ENCODE measurements at regions of chrX and their contacts with region 1.

Region 1: GRCh38 chrX:150977411-150978162 is 5.5 kb upstream of the HMGB3 start:
- DNase-seq: no peak
- ATAC-seq: no peak
- H3K4me3 ChIP-seq: no peak overlapping the region
- H3K27ac ChIP-seq: no peak overlapping the region
- H3K4me1 ChIP-seq: peaks cover 0 to 2% of the 10 kb centered on the region in 2 donors
- H3K27me3 ChIP-seq: no peaks in the 10 kb centered on the region
- CTCF ChIP-seq: no peak
- POLR2A ChIP-seq: no peak

Region 2: GRCh38 chrX:150504397-150505182 is 473.0 kb before region 1 on chrX:
- in situ Hi-C with region 1: no loop called
- intact Hi-C with region 1: no loop called
- DNase-seq: no peak
- ATAC-seq: no peak
- H3K4me3 ChIP-seq: no peak overlapping the region
- H3K27ac ChIP-seq: no peak overlapping the region
- H3K4me1 ChIP-seq: peaks cover 0 to 11% of the 10 kb centered on the region in 2 donors
- H3K27me3 ChIP-seq: no peaks in the 10 kb centered on the region
- CTCF ChIP-seq: no peak
- POLR2A ChIP-seq: no peak

Region 3: GRCh38 chrX:150913511-150913910 is 64.1 kb before region 1 on chrX:
- in situ Hi-C with region 1: no loop called
- intact Hi-C with region 1: no loop called
- DNase-seq: no peak
- ATAC-seq: no peak
- H3K4me3 ChIP-seq: no peak overlapping the region
- H3K27ac ChIP-seq: no peak overlapping the region
- H3K4me1 ChIP-seq: no peaks in the 10 kb centered on the region
- H3K27me3 ChIP-seq: no peaks in the 10 kb centered on the region
- CTCF ChIP-seq: no peak
- POLR2A ChIP-seq: no peak

Region 4: DNA sequence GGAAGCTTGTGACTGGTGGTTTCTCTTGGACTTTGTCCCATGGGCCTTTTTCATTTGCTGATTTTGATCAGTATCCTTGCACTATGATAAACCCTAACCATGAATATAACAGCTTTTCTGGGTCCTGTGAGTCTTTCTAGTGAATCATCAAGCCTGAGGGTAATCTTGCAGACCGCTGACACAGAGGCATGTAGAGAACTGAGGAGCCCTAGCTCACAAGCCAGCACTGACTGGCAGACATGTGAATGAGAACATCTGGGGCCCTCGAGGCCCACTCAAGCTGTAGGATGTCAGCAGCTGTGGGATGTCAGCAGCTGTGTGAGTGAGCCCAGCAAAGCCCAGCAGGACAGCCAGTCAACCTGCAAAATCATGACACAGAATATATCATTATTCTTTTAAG is 42.3 kb after region 1 on chrX:
- in situ Hi-C with region 1: no loop called
- intact Hi-C with region 1: no loop called
- DNase-seq: no peak
- ATAC-seq: no peak
- H3K4me3 ChIP-seq: no peak overlapping the region
- H3K27ac ChIP-seq: no peak overlapping the region
- H3K4me1 ChIP-seq: no peaks in the 10 kb centered on the region
- H3K27me3 ChIP-seq: no peaks in the 10 kb centered on the region
- CTCF ChIP-seq: no peak
- POLR2A ChIP-seq: no peak

Region 5: GRCh38 chrX:151039351-151039750 is 61.8 kb after region 1 on chrX:
- in situ Hi-C with region 1: no loop called
- intact Hi-C with region 1: loop called (anchors 2 kb)
- DNase-seq: no peak
- ATAC-seq: no peak
- H3K4me3 ChIP-seq: no peak overlapping the region
- H3K27ac ChIP-seq: no peak overlapping the region
- H3K4me1 ChIP-seq: no peaks in the 10 kb centered on the region
- H3K27me3 ChIP-seq: no peaks in the 10 kb centered on the region
- CTCF ChIP-seq: no peak
- POLR2A ChIP-seq: no peak

Measured in gastrocnemius medialis (tissue), 4 donors.